Activated B cell treated with CpG ODN at 0.5 μM for 24 hours (primary cell): ENCODE measurements at regions of chr3 and their contacts with region 1.

Region 1: DNA sequence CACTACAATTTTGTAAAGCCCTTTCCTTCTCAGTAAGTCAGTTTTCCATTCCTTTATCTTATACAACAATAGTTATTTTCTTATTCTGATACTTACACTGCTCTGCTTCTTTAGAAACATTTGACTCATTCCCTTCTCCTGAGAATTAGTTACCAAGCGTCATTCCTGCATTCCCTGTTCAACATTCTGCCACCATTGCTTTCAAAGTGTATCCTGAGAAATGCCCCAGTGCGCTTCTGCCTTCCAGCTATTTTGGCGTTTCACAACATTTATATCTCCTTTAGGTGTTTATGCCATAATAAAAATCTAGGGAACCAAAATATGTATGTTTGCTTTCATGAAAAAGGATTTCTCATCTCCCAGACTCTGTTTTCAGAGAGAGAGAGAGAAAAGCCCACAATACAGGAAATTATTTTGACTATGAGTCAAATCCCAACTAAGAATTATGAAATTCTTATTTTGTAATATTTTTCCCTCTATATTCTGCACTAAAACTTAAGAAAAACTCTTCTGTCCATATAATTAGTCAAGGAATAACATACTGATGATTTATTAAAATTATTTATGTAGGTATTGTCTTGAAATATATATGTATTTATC is 118.2 kb upstream of the RAP2B start:
- DNase-seq: no peak
- ATAC-seq: no peak
- H3K4me3 Mint-ChIP-seq: no peak overlapping the region
- H3K27ac Mint-ChIP-seq: no peak overlapping the region
- H3K4me1 Mint-ChIP-seq: peaks cover 1% of the 10 kb centered on the region
- H3K27me3 Mint-ChIP-seq: peaks cover 6% of the 10 kb centered on the region
- CTCF ChIP-seq: no peak

Region 2: DNA sequence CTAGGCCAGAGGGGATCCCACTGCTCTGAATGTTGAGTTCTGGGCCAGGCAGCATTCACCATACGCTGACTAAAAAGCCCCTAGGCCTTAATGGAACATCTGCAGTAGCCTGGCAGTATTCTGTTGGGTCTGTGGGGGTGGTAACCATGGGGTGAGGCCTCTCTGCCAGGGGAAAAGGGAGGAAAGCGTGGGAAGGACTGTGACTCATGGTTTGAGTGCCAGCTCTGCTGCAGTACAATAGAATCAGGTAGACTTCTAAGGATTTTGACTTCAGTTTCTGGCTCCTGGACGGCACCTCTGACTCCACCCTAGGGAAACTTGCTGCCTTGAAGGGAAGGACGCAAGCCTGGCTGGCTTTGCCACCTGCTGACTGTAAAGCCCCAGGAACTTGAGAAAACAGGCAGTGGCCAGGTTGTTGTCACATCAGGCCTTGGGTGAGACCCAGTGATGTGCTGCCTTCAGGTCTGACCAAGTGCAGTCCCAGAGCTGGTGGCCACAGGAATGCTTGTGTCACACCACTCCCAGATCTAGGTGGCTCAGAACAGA is 1021.8 kb before region 1 on chr3:
- CTCF ChIA-PET with region 1: no interaction called
- POLR2A ChIA-PET with region 1: no interaction called
- intact Hi-C with region 1: no loop called
- DNase-seq: no peak
- ATAC-seq: no peak
- H3K4me3 Mint-ChIP-seq: no peak overlapping the region
- H3K27ac Mint-ChIP-seq: no peak overlapping the region
- H3K4me1 Mint-ChIP-seq: no peaks in the 10 kb centered on the region
- H3K27me3 Mint-ChIP-seq: peaks cover 2% of the 10 kb centered on the region
- CTCF ChIP-seq: no peak

Region 3: DNA sequence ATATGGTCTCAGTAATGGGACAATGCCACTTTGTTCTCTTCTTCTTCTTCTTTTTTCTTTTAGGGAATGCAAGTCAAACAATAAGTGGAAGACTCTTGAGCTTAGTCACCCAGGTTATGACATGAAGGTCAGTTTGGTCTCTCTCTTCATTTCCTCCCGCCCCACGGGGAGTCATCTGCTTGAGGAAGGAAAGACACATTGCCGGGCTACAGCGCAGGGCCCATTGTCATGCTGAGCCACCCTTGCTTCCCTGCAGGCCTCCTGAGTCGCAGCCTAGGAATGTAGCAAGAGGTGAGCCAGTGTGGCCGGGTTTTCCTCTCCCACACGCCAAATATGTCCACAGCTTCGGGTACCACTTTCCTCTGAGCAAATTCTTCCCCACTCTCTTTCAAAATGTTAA is 165.8 kb after region 1 on chr3:
- CTCF ChIA-PET with region 1: no interaction called
- POLR2A ChIA-PET with region 1: no interaction called
- intact Hi-C with region 1: no loop called
- DNase-seq: no peak
- ATAC-seq: no peak
- H3K4me3 Mint-ChIP-seq: no peak overlapping the region
- H3K27ac Mint-ChIP-seq: no peak overlapping the region
- H3K4me1 Mint-ChIP-seq: no peaks in the 10 kb centered on the region
- H3K27me3 Mint-ChIP-seq: no peaks in the 10 kb centered on the region
- CTCF ChIP-seq: no peak

Region 4: GRCh38 chr3:153290272-153291015 is 246.6 kb after region 1 on chr3:
- CTCF ChIA-PET with region 1: interaction called, 5 read pairs
- POLR2A ChIA-PET with region 1: no interaction called
- intact Hi-C with region 1: loop called (anchors 1 kb)
- DNase-seq: no peak
- ATAC-seq: no peak
- H3K4me3 Mint-ChIP-seq: no peak overlapping the region
- H3K27ac Mint-ChIP-seq: no peak overlapping the region
- H3K4me1 Mint-ChIP-seq: peaks cover 2% of the 10 kb centered on the region
- H3K27me3 Mint-ChIP-seq: no peaks in the 10 kb centered on the region
- CTCF ChIP-seq: no peak

Region 5: DNA sequence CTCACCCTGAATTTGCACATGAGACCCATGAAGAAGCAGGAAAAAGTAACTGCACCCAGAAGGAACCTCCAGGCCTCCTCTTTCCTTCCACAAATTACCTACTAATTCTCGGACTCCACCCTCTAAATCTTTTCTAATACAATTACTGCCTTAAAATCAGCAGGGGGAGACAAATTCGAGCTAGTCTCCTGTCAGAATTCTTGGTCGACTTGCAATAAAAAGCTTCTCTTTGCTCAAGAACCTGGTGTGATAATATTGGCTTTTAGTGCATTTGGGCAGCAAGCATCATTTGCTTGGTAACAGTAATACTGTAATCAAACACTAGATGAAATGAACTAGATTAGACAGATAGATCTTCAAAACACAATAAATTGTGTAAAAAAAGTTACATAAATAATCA is 400.1 kb after region 1 on chr3:
- CTCF ChIA-PET with region 1: interaction called, 3 read pairs
- POLR2A ChIA-PET with region 1: no interaction called
- intact Hi-C with region 1: loop called (anchors 1 kb)
- DNase-seq: no peak
- ATAC-seq: no peak
- H3K4me3 Mint-ChIP-seq: no peak overlapping the region
- H3K27ac Mint-ChIP-seq: no peak overlapping the region
- H3K4me1 Mint-ChIP-seq: no peaks in the 10 kb centered on the region
- H3K27me3 Mint-ChIP-seq: peaks cover 1% of the 10 kb centered on the region
- CTCF ChIP-seq: no peak

Region 6: DNA sequence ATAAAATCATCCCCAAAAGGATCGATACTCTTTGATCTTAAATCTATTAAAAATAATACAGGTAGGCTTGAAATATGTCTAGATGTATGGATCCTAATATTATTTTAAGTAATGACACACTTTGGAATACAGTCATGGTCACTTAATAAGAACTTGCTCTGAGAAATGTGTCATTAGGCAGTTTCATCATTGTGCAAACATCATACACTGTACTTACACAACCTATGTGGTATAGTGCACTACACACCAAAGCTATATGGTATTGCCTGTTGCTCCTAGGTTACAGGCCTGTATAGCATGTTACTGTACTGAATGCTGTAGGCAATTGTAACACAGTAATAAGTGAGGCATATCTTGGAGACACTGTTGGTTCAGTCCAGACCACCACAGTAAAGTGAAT is 425.3 kb after region 1 on chr3:
- CTCF ChIA-PET with region 1: no interaction called
- POLR2A ChIA-PET with region 1: no interaction called
- intact Hi-C with region 1: no loop called
- DNase-seq: no peak
- ATAC-seq: no peak
- H3K4me3 Mint-ChIP-seq: no peak overlapping the region
- H3K27ac Mint-ChIP-seq: no peak overlapping the region
- H3K4me1 Mint-ChIP-seq: peaks cover 4% of the 10 kb centered on the region
- H3K27me3 Mint-ChIP-seq: no peaks in the 10 kb centered on the region
- CTCF ChIP-seq: no peak

Region 7: GRCh38 chr3:153595186-153595815 is 551.5 kb after region 1 on chr3:
- CTCF ChIA-PET with region 1: interaction called, 3 read pairs
- POLR2A ChIA-PET with region 1: no interaction called
- intact Hi-C with region 1: loop called (anchors 1 kb)
- DNase-seq: no peak
- ATAC-seq: no peak
- H3K4me3 Mint-ChIP-seq: no peak overlapping the region
- H3K27ac Mint-ChIP-seq: no peak overlapping the region
- H3K4me1 Mint-ChIP-seq: no peaks in the 10 kb centered on the region
- H3K27me3 Mint-ChIP-seq: no peaks in the 10 kb centered on the region
- CTCF ChIP-seq: no peak

Region 8: GRCh38 chr3:153768561-153769469 is 725.0 kb after region 1 on chr3:
- CTCF ChIA-PET with region 1: interaction called, 32 read pairs
- POLR2A ChIA-PET with region 1: no interaction called
- intact Hi-C with region 1: loop called (anchors 1 kb)
- DNase-seq: no peak
- ATAC-seq: peak; percentile 77
- H3K4me3 Mint-ChIP-seq: no peak overlapping the region
- H3K27ac Mint-ChIP-seq: no peak overlapping the region
- H3K4me1 Mint-ChIP-seq: no peaks in the 10 kb centered on the region
- H3K27me3 Mint-ChIP-seq: peaks cover 3% of the 10 kb centered on the region
- CTCF ChIP-seq: peak; percentile 15

Region 9: GRCh38 chr3:154018100-154018696 is 974.4 kb after region 1 on chr3:
- CTCF ChIA-PET with region 1: no interaction called
- POLR2A ChIA-PET with region 1: no interaction called
- intact Hi-C with region 1: loop called (anchors 1 kb)
- DNase-seq: no peak
- ATAC-seq: peak; percentile 42
- H3K4me3 Mint-ChIP-seq: no peak overlapping the region
- H3K27ac Mint-ChIP-seq: no peak overlapping the region
- H3K4me1 Mint-ChIP-seq: no peaks in the 10 kb centered on the region
- H3K27me3 Mint-ChIP-seq: no peaks in the 10 kb centered on the region
- CTCF ChIP-seq: no peak

Region 10: GRCh38 chr3:154252759-154253638 is 1209.2 kb after region 1 on chr3:
- CTCF ChIA-PET with region 1: interaction called, 8 read pairs
- POLR2A ChIA-PET with region 1: no interaction called
- intact Hi-C with region 1: loop called (anchors 1 kb)
- DNase-seq: peak; percentile 47
- ATAC-seq: peak; percentile 79
- H3K4me3 Mint-ChIP-seq: no peak overlapping the region
- H3K27ac Mint-ChIP-seq: no peak overlapping the region
- H3K4me1 Mint-ChIP-seq: peaks cover 3% of the 10 kb centered on the region
- H3K27me3 Mint-ChIP-seq: no peaks in the 10 kb centered on the region
- CTCF ChIP-seq: peak; percentile 64